ENCODE measurements at regions of chr7 and their contacts with region 1.

Region 1: DNA sequence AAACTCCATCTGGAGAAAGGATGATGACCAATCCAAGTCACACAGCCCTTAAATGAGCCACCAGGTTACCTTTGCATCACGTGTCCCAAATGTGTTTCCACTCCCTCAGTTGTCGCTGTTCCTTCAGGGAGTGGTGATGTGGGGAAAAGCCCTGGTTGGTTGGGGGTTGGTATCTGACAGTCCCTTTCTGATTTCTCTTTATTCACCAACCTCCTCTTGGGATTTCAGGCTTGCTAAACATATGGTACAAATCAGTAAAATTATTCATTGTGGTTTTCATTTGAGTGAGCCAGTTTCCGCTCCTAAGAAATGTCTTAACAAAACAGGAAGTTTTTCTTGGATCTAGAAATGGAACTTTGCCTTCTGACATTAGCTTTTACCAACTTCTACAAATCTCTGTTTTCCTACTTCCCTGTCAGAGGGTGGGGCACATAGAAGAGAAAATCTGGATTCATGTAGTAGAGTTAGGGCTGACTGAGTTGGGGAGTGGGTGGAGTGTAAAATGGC is 40.0 kb upstream of the KMT2E start:
- DNase-seq: no peak

Region 2: GRCh38 chr7:104943502-104944343 is 30.2 kb before region 1 on chr7:
- intact Hi-C with region 1: loop called (anchors 1 kb)
- DNase-seq: peak; percentile 79

Measured in cardiac septum (tissue), 1 donor.